ENCODE measurements at regions of chr4 and their contacts with region 1.

Region 1: DNA sequence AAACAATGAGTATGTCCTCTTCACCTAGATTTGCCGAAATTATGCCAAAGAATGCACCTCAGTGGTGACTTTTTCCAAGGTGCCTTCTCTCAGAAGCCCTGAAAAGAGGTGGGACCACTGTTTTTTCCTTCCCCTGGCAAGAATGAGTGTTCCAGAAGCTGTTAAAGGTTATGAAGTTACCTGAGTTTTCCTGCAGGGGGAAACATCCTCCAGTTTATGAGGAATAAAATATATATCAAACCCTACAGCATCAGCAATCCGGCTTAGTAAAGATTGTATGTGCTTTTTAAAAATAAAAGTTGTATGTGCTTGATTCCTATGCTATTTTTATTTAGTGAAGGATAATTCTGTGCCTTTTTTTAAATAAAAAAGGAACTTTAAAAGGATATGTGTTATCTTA is 73.3 kb downstream of the RBM46 start:
- DNase-seq: no peak
- H3K4me3 Mint-ChIP-seq: no peak overlapping the region
- H3K27ac Mint-ChIP-seq: no peak overlapping the region
- H3K4me1 Mint-ChIP-seq: no peaks in the 10 kb centered on the region
- H3K27me3 Mint-ChIP-seq: no peaks in the 10 kb centered on the region
- CTCF ChIP-seq: no peak

Region 2: GRCh38 chr4:154757713-154758112 is 96.6 kb before region 1 on chr4:
- CTCF ChIA-PET with region 1: no interaction called
- intact Hi-C with region 1: no loop called
- DNase-seq: no peak
- H3K4me3 Mint-ChIP-seq: no peak overlapping the region
- H3K27ac Mint-ChIP-seq: no peak overlapping the region
- H3K4me1 Mint-ChIP-seq: no peaks in the 10 kb centered on the region
- H3K27me3 Mint-ChIP-seq: no peaks in the 10 kb centered on the region
- CTCF ChIP-seq: no peak

Region 3: DNA sequence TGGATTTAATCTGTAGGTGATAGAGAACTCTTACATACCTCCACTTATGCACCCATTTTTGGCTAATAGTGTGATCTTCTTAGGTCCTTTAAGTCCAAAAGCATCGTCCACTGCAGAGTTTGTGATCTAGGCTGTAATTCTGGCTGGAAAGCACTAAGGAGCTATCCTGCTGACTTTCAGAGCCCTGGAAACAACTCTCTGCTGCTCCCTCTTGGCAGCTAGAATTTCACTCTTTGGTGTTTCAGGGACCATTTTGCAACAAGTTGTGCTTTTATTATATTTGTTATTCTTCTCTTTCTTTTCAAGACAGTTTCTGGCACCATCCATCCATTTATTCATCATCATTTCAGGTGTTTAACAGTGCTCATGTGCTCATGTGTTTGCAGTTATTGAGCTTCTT is 56.7 kb after region 1 on chr4:
- CTCF ChIA-PET with region 1: interaction called, 3 read pairs
- intact Hi-C with region 1: loop called (anchors 5 kb)
- DNase-seq: no peak
- H3K4me3 Mint-ChIP-seq: no peak overlapping the region
- H3K27ac Mint-ChIP-seq: no peak overlapping the region
- H3K4me1 Mint-ChIP-seq: no peaks in the 10 kb centered on the region
- H3K27me3 Mint-ChIP-seq: no peaks in the 10 kb centered on the region
- CTCF ChIP-seq: no peak

Region 4: GRCh38 chr4:154928640-154929257 is 74.4 kb after region 1 on chr4:
- CTCF ChIA-PET with region 1: interaction called, 7 read pairs
- intact Hi-C with region 1: loop called (anchors 1 kb)
- DNase-seq: peak; percentile 34
- H3K4me3 Mint-ChIP-seq: no peak overlapping the region
- H3K27ac Mint-ChIP-seq: no peak overlapping the region
- H3K4me1 Mint-ChIP-seq: no peaks in the 10 kb centered on the region
- H3K27me3 Mint-ChIP-seq: no peaks in the 10 kb centered on the region
- CTCF ChIP-seq: peak; percentile 37

Region 5: GRCh38 chr4:154982187-154983047 is 128.1 kb after region 1 on chr4:
- CTCF ChIA-PET with region 1: no interaction called
- intact Hi-C with region 1: loop called (anchors 1 kb)
- DNase-seq: peak; percentile 50
- H3K4me3 Mint-ChIP-seq: no peak overlapping the region
- H3K27ac Mint-ChIP-seq: no peak overlapping the region
- H3K4me1 Mint-ChIP-seq: no peaks in the 10 kb centered on the region
- H3K27me3 Mint-ChIP-seq: no peaks in the 10 kb centered on the region
- CTCF ChIP-seq: peak; percentile 36

Region 6: GRCh38 chr4:155353923-155354540 is 499.7 kb after region 1 on chr4:
- CTCF ChIA-PET with region 1: no interaction called
- intact Hi-C with region 1: loop called (anchors 1 kb)
- DNase-seq: peak; percentile 70
- H3K4me3 Mint-ChIP-seq: no peak overlapping the region
- H3K27ac Mint-ChIP-seq: no peak overlapping the region
- H3K4me1 Mint-ChIP-seq: no peaks in the 10 kb centered on the region
- H3K27me3 Mint-ChIP-seq: no peaks in the 10 kb centered on the region
- CTCF ChIP-seq: peak; percentile 35